ENCODE measurements at regions of chr18 and their contacts with region 1.

Region 1: GRCh38 chr18:43587538-43588153 is 310.4 kb upstream of the SYT4 start:
- DNase-seq: peak; percentile 7
- H3K4me3 Mint-ChIP-seq: no peak overlapping the region
- H3K27ac Mint-ChIP-seq: no peak overlapping the region
- H3K4me1 Mint-ChIP-seq: no peaks in the 10 kb centered on the region
- H3K27me3 Mint-ChIP-seq: no peaks in the 10 kb centered on the region
- CTCF ChIP-seq: peak; percentile 65

Region 2: GRCh38 chr18:43539862-43540261 is 47.8 kb before region 1 on chr18:
- CTCF ChIA-PET with region 1: no interaction called
- intact Hi-C with region 1: loop called (anchors 5 kb)
- DNase-seq: no peak
- H3K4me3 Mint-ChIP-seq: no peak overlapping the region
- H3K27ac Mint-ChIP-seq: no peak overlapping the region
- H3K4me1 Mint-ChIP-seq: peaks cover 11% of the 10 kb centered on the region
- H3K27me3 Mint-ChIP-seq: no peaks in the 10 kb centered on the region
- CTCF ChIP-seq: no peak

Region 3: DNA sequence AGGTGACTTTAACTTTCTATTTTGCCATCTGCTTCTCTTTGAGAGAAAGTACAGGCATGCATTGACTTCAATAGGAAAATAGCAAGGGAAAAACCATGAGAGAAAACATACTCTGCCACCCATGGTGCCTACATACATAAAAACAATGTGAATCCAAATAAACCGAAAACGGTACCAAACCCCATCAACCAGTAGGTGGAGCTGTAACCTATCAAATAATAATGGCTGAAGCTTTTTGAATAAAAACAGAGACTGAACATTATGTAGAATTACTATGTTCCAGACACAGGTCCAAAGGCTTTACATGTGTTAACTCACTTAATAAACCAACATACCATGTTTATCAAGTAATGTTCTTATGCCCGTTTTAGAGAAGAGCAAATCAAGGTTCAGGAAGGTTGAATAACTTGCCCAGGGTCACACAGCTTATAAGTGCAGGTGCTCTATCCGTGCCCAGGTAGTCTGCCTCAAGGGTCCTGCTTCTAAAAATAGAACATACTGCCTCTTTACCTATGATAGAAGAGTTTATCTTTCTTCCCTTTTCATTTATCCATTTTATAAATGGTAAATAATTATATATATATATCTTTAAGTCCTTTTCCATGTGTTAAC is 16.5 kb before region 1 on chr18:
- CTCF ChIA-PET with region 1: interaction called, 27 read pairs
- intact Hi-C with region 1: loop called (anchors 1 kb)
- DNase-seq: peak; percentile 42
- H3K4me3 Mint-ChIP-seq: no peak overlapping the region
- H3K27ac Mint-ChIP-seq: no peak overlapping the region
- H3K4me1 Mint-ChIP-seq: no peaks in the 10 kb centered on the region
- H3K27me3 Mint-ChIP-seq: peaks cover 28% of the 10 kb centered on the region
- CTCF ChIP-seq: peak; percentile 83

Measured in Calu3 (cell line).